ENCODE measurements at regions of chr2 and their contacts with region 1.

Region 1: GRCh38 chr2:38750891-38751595 is at the start of gene SRSF7:
- DNase-seq: peak; percentile 98
- H3K4me3 ChIP-seq: peak within 1 kb of the TSS; percentile 100
- H3K27ac ChIP-seq: peak within 1 kb of the TSS; percentile 85
- H3K27me3 ChIP-seq: no peaks in the 10 kb centered on the region
- CTCF ChIP-seq: no peak
- polyA plus RNA-seq, gene SRSF7: 195 and 238 TPM in 2 replicates

Region 2: DNA sequence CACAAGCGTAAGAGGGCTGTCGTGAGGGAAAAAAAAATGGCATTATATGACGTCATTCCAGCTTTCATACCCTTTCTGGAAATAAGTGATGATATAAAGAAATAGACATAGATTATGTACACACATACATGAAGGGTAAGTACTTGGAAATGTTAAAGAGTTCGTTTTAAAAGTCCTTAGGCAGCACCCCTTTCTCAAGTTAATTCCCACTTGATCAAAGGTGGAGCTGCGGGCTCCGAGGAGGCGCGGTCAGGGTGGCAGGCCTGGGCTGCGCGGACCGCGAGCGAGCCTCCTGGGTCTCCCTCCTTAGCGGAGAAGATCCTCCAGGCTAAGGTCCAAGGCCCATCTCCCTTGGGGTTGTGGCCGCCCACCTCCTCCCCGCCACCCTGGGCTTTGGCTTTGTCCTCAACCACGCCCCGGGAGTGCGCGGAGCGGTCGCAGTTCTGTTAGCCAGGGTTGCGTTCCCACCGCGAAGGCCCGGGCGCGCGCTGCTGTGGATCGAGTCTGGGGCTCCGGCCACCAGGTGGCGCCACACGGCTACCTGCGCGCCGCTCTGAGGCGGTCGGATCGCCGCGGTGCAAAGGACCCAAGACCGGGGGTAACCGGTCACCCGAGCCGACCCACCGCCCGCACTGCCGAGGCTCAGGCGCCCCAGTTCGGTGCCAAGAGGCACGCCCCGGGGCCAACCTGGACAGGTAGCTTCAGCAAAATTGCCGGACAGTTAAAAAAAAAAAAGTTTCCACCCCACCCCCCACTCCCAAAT is 215.1 kb before region 1 on chr2:
- CTCF ChIA-PET with region 1: interaction called, 3 read pairs
- POLR2A ChIA-PET with region 1: interaction called, 10 read pairs
- DNase-seq: no peak
- H3K4me3 ChIP-seq: peak overlapping the region; percentile 66
- H3K27ac ChIP-seq: no peak overlapping the region
- H3K27me3 ChIP-seq: no peaks in the 10 kb centered on the region
- CTCF ChIP-seq: peak; percentile 84

Region 3: DNA sequence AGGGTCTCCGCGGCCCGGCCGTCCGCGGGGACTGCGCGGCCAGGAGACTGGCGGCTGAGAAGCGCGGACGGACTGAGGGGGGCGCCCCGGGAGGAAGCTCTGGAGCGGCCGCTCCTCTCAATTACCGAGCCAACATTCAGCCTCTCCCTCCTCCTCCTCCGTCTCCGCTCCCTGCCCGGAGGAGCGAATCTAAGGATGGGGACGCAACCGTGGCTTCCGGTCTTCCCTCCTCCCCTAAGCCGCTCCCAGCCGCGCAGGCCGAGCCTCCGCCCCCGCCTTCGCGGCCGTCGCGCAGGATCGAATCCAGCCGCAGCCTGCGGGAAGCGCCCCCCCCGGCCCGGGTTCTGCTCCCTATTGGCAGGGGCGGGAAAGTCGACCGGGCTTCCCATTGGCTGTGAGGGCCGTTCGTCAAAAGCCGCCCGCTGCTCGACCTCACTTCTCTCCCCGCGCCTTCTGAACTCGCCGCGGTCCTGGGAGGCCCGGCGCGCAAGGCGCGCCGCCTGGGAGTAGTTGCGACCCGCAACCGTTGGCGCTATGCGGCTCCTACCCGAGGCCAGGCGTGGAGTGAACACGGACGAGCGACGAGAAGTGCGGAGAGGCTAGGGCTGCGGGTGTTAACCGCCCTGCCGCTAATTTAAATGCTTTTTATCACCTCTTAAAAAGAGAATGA is 148.2 kb before region 1 on chr2 and contains the start of gene HNRNPLL:
- CTCF ChIA-PET with region 1: no interaction called
- POLR2A ChIA-PET with region 1: interaction called, 42 read pairs
- DNase-seq: peak; percentile 93
- H3K4me3 ChIP-seq: peak within 1 kb of the TSS; percentile 81
- H3K27ac ChIP-seq: peak within 1 kb of the TSS; percentile 77
- H3K27me3 ChIP-seq: no peaks in the 10 kb centered on the region
- CTCF ChIP-seq: no peak
- polyA plus RNA-seq, gene HNRNPLL: 55.0 and 78.5 TPM in 2 replicates

Region 4: DNA sequence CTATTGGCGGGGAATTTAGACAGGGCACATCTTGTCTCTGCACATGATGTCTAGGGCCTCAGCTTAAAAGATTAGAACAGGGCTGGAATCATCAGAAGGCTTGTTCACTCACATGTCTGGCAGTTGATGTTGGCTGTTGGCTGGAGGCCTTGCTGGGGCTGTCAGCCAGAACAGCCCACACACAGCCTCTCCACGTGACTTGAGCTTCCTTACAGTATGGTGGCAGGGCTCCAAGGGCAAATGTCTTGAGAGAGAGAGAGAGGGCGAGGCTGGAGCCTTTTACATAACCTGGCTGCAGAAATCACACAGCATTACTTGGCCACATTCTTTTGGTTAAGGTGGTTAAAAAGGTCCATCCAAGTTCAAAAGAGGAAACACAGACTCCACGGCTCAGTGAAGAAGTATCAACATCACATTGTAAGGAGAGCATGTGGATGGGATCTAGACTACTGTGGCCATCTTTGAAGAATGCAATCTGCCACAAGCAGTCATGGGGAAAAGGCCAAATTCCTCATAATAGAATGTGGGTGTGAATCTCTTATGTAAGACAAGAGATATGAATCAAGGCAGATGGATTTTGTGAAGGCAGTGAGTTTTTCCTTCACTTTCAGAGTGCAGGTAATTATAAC is 30.3 kb before region 1 on chr2:
- CTCF ChIA-PET with region 1: no interaction called
- POLR2A ChIA-PET with region 1: interaction called, 16 read pairs
- DNase-seq: peak; percentile 94
- H3K4me3 ChIP-seq: no peak overlapping the region
- H3K27ac ChIP-seq: peak overlapping the region; percentile 59
- H3K27me3 ChIP-seq: no peaks in the 10 kb centered on the region
- CTCF ChIP-seq: no peak

Region 5: GRCh38 chr2:38771632-38772031 is 20.6 kb after region 1 on chr2:
- CTCF ChIA-PET with region 1: no interaction called
- POLR2A ChIA-PET with region 1: interaction called, 44 read pairs
- DNase-seq: no peak
- H3K4me3 ChIP-seq: no peak overlapping the region
- H3K27ac ChIP-seq: no peak overlapping the region
- H3K27me3 ChIP-seq: no peaks in the 10 kb centered on the region
- CTCF ChIP-seq: no peak

Region 6: GRCh38 chr2:38828460-38828859 is 77.4 kb after region 1 on chr2:
- CTCF ChIA-PET with region 1: interaction called, 3 read pairs
- POLR2A ChIA-PET with region 1: interaction called, 30 read pairs
- DNase-seq: no peak
- H3K4me3 ChIP-seq: no peak overlapping the region
- H3K27ac ChIP-seq: no peak overlapping the region
- H3K27me3 ChIP-seq: no peaks in the 10 kb centered on the region
- CTCF ChIP-seq: no peak